ENCODE measurements at regions of chr11 and their contacts with region 1.

Region 1: DNA sequence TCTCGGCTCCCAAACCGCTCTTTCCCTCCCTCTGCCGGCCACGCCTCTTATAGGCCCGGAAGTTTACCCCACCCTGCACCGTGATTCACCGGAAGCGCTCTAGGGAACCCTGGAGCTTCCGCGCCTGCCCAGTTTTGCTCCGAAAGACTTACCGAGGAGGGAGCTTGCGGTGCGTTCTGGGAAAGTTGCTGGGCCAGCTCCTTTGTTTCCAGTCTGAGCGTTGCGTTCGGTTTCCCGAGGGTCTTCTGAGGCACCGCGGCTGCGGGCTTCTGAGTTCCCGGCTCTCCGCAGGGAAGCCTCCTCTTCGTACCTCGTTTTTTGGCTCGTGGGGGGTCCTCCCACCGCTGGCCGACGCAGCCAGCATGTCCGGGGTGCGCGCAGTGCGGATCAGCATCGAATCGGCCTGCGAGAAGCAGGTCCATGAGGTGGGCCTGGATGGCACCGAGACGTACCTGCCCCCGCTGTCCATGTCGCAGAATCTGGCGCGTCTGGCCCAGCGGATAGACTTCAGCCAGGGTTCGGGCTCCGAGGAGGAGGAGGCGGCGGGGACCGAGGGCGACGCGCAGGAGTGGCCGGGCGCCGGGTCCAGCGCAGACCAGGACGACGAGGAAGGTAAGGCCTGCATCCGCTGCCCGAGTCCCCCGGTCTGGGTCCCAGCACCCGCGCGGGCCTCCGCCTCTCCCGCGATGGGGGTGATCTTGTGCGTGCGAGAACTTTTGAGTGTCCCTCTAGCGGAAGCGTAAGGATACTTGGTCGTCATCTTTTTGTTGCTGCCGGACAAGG is at the start of gene MED17:
- DNase-seq: peak; percentile 64
- ATAC-seq: peak; percentile 95
- H3K4me3 ChIP-seq: peak within 1 kb of the TSS; percentile 80
- H3K27ac ChIP-seq: peak within 1 kb of the TSS; percentile 95
- H3K4me1 ChIP-seq: no peaks in the 10 kb centered on the region; the same call in 1 of the 2 replicates
- H3K27me3 ChIP-seq: no peaks in the 10 kb centered on the region
- CTCF ChIP-seq: peak; percentile 39 to 51 (median 44); a peak in 5 of 6 replicates
- EP300 ChIP-seq: no peak
- POLR2A ChIP-seq: peak; percentile 86
- RAD21 ChIP-seq: no peak; the same call in 1 of the 2 replicates
- polyA plus RNA-seq, gene MED17: 7.3 to 12.4 TPM

Region 2: DNA sequence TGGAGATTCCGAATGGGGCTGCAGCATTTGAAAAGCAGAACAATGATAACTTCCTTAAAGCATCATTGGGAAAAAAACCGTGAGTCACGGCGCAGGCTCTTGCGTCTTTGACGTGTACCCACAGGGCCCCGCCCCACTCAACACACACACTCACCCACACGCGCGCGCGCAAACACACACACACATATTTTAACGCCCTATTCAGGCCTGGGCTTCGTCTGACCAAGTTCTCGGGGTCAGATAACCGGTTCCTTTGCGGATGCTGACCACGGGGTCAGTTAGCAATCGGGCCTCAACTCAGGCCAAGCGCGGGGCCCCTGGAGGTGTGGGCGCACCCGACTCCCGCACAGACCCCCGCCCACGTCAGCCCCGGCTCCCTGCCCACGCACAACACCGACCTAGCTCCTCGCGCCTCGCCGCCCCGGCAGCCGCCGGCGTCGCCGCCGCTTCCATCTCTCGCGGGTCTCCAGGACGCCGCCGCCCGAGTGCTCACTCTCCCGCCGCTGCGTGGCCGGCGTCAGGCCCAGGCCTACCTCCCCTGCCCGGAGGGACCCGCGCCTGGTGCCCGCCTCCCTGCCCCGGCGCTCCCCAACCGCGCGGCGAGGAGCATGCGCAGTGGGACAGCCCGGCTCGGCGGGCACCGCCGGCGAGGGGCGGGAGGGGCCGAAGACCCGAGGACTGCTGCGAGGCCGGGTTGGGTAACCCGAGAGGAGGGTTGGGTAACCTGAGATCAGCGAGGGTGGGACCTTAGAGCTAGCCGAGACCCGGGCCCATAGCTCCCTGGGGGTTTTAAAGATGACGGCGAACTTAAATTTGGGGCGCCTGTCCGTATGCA is 586.7 kb before region 1 on chr11 and contains the start of gene SLC36A4:
- CTCF ChIA-PET with region 1: no interaction called
- POLR2A ChIA-PET with region 1: no interaction called
- RAD21 ChIA-PET with region 1: no interaction called
- SMC1A ChIA-PET with region 1: no interaction called
- in situ Hi-C with region 1: no loop called
- intact Hi-C with region 1: loop called (anchors 10 kb)
- DNase-seq: peak; percentile 57
- ATAC-seq: peak; percentile 95
- H3K4me3 ChIP-seq: peak within 1 kb of the TSS; percentile 70
- H3K27ac ChIP-seq: peak within 1 kb of the TSS; percentile 51
- H3K4me1 ChIP-seq: no peaks in the 10 kb centered on the region
- H3K27me3 ChIP-seq: no peaks in the 10 kb centered on the region
- CTCF ChIP-seq: no peak
- EP300 ChIP-seq: no peak
- POLR2A ChIP-seq: peak; percentile 77
- RAD21 ChIP-seq: no peak
- polyA plus RNA-seq, gene SLC36A4: 1.4 to 2.0 TPM

Region 3: DNA sequence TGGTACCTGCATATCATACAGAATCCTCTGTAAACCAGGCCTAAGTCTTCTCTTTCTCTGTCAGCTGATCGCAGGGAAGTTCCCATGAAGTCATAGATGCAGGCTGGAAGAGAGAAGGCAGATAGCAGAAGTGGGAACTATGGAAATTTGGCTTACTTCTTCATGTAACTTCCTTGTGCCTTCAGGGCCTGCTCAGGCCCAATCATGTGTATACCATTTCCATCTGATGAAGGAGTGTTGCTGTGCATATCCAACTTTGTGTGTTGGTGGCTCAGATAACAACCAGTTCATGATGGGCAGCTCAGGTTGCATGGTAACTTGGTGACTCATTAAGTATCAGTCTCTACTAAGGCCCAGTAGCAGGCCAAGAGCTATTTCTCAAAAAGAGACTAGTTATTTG is 176.0 kb before region 1 on chr11:
- CTCF ChIA-PET with region 1: no interaction called
- POLR2A ChIA-PET with region 1: no interaction called
- RAD21 ChIA-PET with region 1: no interaction called
- SMC1A ChIA-PET with region 1: no interaction called
- in situ Hi-C with region 1: no loop called
- intact Hi-C with region 1: no loop called
- DNase-seq: no peak
- ATAC-seq: peak; percentile 33; the same call in 2 of the 3 replicates
- H3K4me3 ChIP-seq: no peak overlapping the region
- H3K27ac ChIP-seq: no peak overlapping the region
- H3K4me1 ChIP-seq: no peaks in the 10 kb centered on the region
- H3K27me3 ChIP-seq: no peaks in the 10 kb centered on the region
- CTCF ChIP-seq: no peak
- EP300 ChIP-seq: no peak
- POLR2A ChIP-seq: no peak
- RAD21 ChIP-seq: no peak

Region 4: GRCh38 chr11:93662177-93662575 is 122.2 kb before region 1 on chr11:
- CTCF ChIA-PET with region 1: no interaction called
- POLR2A ChIA-PET with region 1: interaction called, 7 read pairs
- RAD21 ChIA-PET with region 1: interaction called, 5 read pairs
- SMC1A ChIA-PET with region 1: interaction called, 5 read pairs
- in situ Hi-C with region 1: no loop called
- intact Hi-C with region 1: loop called (anchors 2 kb)
- DNase-seq: no peak
- ATAC-seq: peak; percentile 13
- H3K4me3 ChIP-seq: peak overlapping the region; percentile 80
- H3K27ac ChIP-seq: peak overlapping the region; percentile 83
- H3K4me1 ChIP-seq: peaks cover 4% of the 10 kb centered on the region; the same call in 1 of the 2 replicates
- H3K27me3 ChIP-seq: no peaks in the 10 kb centered on the region
- CTCF ChIP-seq: no peak
- EP300 ChIP-seq: no peak
- POLR2A ChIP-seq: no peak
- RAD21 ChIP-seq: no peak

Region 5: DNA sequence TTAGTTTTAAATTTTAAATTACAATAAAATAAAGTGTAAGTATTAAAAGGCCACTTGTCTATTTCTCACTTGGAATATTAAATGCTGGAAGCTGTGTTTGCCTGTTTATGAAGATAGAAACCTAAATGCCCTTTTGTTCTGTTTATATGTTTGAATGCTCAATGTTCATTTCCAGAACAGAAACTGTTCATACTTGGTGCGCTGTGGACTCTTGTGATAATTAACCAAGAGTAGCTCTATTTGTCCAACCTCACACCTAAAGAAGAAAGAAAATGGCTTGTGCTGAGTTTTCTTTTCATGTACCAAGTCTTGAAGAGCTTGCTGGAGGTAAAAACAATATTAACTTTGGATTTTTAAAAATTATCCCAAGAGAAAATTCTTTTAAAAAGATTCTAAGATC is 37.2 kb before region 1 on chr11:
- CTCF ChIA-PET with region 1: interaction called, 36 read pairs
- POLR2A ChIA-PET with region 1: interaction called, 85 read pairs
- RAD21 ChIA-PET with region 1: interaction called, 40 read pairs
- SMC1A ChIA-PET with region 1: interaction called, 74 read pairs
- in situ Hi-C with region 1: no loop called
- intact Hi-C with region 1: no loop called
- DNase-seq: no peak
- ATAC-seq: peak; percentile 91
- H3K4me3 ChIP-seq: no peak overlapping the region
- H3K27ac ChIP-seq: no peak overlapping the region
- H3K4me1 ChIP-seq: no peaks in the 10 kb centered on the region
- H3K27me3 ChIP-seq: no peaks in the 10 kb centered on the region
- CTCF ChIP-seq: no peak
- EP300 ChIP-seq: peak in 1 of 2 experiments; percentile 48; a peak in 1 of 4 replicates
- POLR2A ChIP-seq: no peak
- RAD21 ChIP-seq: no peak

Region 6: DNA sequence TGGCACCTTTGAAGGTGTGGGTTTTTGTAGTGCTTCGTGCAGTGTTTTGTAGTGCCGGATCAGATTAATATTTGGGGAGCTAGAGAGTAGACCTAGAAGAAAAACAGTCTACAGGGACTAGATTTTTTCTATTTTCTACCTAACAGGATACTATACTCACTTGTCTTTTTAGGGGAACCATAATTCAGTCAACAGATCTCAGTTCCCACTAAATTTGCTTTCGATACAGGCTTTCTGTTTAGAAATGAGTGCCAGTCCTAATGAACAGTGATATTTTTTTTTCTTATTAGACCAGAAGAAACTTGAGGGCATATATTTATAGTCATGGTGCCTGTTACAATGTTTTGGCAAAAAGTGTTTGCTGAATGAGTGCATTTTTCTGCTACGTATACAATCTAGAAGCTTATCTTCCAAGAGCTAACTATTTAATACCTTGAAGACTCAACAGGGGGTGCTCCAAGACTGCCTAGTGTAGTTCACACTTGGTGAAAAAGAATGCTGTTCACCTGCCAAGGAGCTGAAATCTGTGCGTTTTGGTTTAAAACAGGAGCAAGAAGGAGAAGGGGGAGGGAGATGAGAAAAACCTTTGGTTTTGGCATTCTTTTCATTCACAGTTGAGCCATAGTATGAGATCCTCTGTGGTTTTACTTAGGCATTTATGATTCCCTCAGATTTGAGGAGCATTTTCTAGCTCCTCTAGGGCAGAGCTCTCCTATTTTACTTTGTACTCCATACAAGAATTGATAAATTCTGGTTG is 110.9 kb after region 1 on chr11:
- CTCF ChIA-PET with region 1: no interaction called
- POLR2A ChIA-PET with region 1: no interaction called
- RAD21 ChIA-PET with region 1: no interaction called
- SMC1A ChIA-PET with region 1: no interaction called
- in situ Hi-C with region 1: no loop called
- intact Hi-C with region 1: no loop called
- DNase-seq: no peak
- ATAC-seq: peak; percentile 82
- H3K4me3 ChIP-seq: no peak overlapping the region
- H3K27ac ChIP-seq: no peak overlapping the region
- H3K4me1 ChIP-seq: no peaks in the 10 kb centered on the region
- H3K27me3 ChIP-seq: no peaks in the 10 kb centered on the region
- CTCF ChIP-seq: peak; percentile 51 to 58 (median 56)
- EP300 ChIP-seq: no peak
- POLR2A ChIP-seq: no peak
- RAD21 ChIP-seq: peak; percentile 76

Measured in GM12878 (cell line).